ENCODE measurements at regions of chr6 and their contacts with region 1.

Region 1: GRCh38 chr6:35522660-35523658 is 10.3 kb upstream of the TULP1 start:
- DNase-seq: peak; percentile 92
- H3K4me3 ChIP-seq: peak overlapping the region in 1 of 2 experiments; percentile 21; a peak in 1 of 4 replicates
- H3K27ac ChIP-seq: no peak overlapping the region
- H3K4me1 ChIP-seq: peaks cover 0 to 5% of the 10 kb centered on the region in 2 experiments; a peak in 1 of 4 replicates
- H3K27me3 ChIP-seq: no peaks in the 10 kb centered on the region
- CTCF ChIP-seq: peak; percentile 84
- EP300 ChIP-seq: no peak
- RAD21 ChIP-seq: peak; percentile 96

Region 2: GRCh38 chr6:35496841-35497570 is 26.0 kb before region 1 on chr6 and contains the start of gene TEAD3:
- CTCF ChIA-PET with region 1: interaction called, 12 read pairs
- POLR2A ChIA-PET with region 1: no interaction called
- DNase-seq: peak; percentile 97
- H3K4me3 ChIP-seq: peak within 1 kb of the TSS; percentile 66 to 79
- H3K27ac ChIP-seq: peak within 1 kb of the TSS; percentile 35 to 82; a peak in 3 of 4 replicates
- H3K4me1 ChIP-seq: peaks cover 12 to 50% of the 10 kb centered on the region in 2 experiments; a peak in 2 of 4 replicates
- H3K27me3 ChIP-seq: no peaks in the 10 kb centered on the region
- CTCF ChIP-seq: peak; percentile 27
- EP300 ChIP-seq: no peak
- RAD21 ChIP-seq: no peak
- polyA plus RNA-seq, gene TEAD3: 5.2 and 7.1 TPM in 2 replicates

Region 3: DNA sequence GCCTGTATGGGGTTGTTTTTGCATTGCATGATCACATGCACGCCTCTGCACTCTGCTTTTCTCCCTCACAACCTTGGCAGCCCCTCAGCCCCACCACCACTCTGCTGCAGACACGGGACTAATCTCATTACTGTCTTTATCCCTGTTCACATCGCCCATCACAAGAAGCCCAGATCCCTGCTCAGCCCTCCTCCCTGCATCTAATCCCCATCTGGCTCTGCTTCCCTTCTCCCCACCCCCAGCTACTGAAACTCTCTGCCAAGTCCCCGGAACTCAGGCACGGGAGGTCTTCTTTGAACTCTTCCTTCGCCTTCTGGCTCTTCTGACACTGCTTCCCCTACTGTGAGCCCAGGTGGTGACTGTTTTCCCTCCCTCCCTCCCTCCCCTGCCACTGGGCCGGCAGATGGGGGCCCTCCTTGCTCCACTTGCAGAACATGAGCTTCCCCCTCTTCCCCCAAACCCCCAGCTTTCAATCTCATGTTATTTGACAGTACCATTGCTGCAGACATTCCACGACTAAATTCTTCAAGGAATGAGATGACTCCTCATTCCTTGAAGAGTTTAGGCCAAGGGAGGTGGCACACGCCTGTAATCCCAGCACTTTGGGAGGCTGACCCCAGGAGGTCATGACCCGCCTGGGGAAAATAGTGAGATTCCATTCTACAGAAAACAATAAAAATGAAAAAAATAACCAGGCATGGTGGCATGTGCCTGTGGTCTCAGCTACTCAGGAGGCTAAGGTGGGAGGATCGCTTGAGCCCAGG is 11.6 kb after region 1 on chr6:
- CTCF ChIA-PET with region 1: interaction called, 34 read pairs
- POLR2A ChIA-PET with region 1: no interaction called
- DNase-seq: peak; percentile 82
- H3K4me3 ChIP-seq: no peak overlapping the region
- H3K27ac ChIP-seq: peak overlapping the region in 1 of 2 experiments; percentile 82; a peak in 2 of 4 replicates
- H3K4me1 ChIP-seq: peaks cover 0 to 33% of the 10 kb centered on the region in 2 experiments; a peak in 1 of 4 replicates
- H3K27me3 ChIP-seq: no peaks in the 10 kb centered on the region
- CTCF ChIP-seq: no peak
- EP300 ChIP-seq: peak in 1 of 2 experiments; percentile 98; a peak in 2 of 4 replicates
- RAD21 ChIP-seq: peak; percentile 24; the same call in 1 of the 2 replicates

Region 4: DNA sequence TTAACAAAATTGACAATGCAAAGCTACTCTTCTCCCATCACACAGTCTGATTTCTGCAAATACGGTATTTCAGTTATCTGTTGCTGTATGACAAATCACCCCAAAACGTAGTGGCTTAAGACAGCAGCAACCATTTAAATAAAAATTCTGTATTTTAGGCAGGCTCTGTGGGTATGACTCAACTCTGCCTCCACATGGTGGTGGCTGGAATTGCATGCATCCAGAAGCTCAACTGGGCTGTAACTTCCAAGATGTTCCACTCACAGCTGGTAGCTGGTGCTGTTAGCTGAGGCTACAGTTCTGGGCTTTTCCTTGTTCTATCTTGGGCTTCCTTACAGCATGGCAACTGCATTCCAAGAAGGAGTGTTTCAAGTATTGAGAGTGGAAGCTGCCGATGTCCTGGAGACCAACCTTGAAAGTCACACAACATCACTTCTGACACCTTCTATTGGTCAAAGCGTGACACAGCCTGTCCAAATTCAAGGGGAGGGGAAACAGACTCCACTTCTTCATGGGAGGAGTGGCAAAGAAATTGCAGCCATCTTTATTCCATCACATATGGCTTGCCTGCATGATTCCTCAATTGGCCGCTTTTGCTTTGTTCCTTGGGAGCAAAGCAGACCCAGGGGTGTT is 29.4 kb after region 1 on chr6:
- CTCF ChIA-PET with region 1: interaction called, 26 read pairs
- POLR2A ChIA-PET with region 1: no interaction called
- DNase-seq: peak; percentile 40
- H3K4me3 ChIP-seq: no peak overlapping the region
- H3K27ac ChIP-seq: no peak overlapping the region
- H3K4me1 ChIP-seq: no peaks in the 10 kb centered on the region; a peak in 1 of 4 replicates
- H3K27me3 ChIP-seq: no peaks in the 10 kb centered on the region
- CTCF ChIP-seq: peak; percentile 66
- EP300 ChIP-seq: no peak
- RAD21 ChIP-seq: peak; percentile 75

Region 5: GRCh38 chr6:35569011-35569461 is 46.1 kb after region 1 on chr6:
- CTCF ChIA-PET with region 1: interaction called, 12 read pairs
- POLR2A ChIA-PET with region 1: no interaction called
- DNase-seq: peak; percentile 30
- H3K4me3 ChIP-seq: no peak overlapping the region; a peak in 1 of 4 replicates
- H3K27ac ChIP-seq: no peak overlapping the region
- H3K4me1 ChIP-seq: peaks cover 0 to 4% of the 10 kb centered on the region in 2 experiments; a peak in 1 of 4 replicates
- H3K27me3 ChIP-seq: peaks cover 4% of the 10 kb centered on the region
- CTCF ChIP-seq: peak; percentile 44
- EP300 ChIP-seq: no peak
- RAD21 ChIP-seq: 0 out of 2 replicates have a peak, but pooled peaks have one; percentile 9

Region 6: GRCh38 chr6:35681298-35681697 is 158.3 kb after region 1 on chr6:
- CTCF ChIA-PET with region 1: interaction called, 10 read pairs
- POLR2A ChIA-PET with region 1: no interaction called
- DNase-seq: no peak
- H3K4me3 ChIP-seq: no peak overlapping the region
- H3K27ac ChIP-seq: no peak overlapping the region
- H3K4me1 ChIP-seq: peaks cover 3 to 22% of the 10 kb centered on the region in 2 experiments; a peak in 3 of 4 replicates
- H3K27me3 ChIP-seq: no peaks in the 10 kb centered on the region
- CTCF ChIP-seq: no peak
- EP300 ChIP-seq: no peak
- RAD21 ChIP-seq: no peak